ENCODE measurements at regions of chr3 and their contacts with region 1.

Region 1: DNA sequence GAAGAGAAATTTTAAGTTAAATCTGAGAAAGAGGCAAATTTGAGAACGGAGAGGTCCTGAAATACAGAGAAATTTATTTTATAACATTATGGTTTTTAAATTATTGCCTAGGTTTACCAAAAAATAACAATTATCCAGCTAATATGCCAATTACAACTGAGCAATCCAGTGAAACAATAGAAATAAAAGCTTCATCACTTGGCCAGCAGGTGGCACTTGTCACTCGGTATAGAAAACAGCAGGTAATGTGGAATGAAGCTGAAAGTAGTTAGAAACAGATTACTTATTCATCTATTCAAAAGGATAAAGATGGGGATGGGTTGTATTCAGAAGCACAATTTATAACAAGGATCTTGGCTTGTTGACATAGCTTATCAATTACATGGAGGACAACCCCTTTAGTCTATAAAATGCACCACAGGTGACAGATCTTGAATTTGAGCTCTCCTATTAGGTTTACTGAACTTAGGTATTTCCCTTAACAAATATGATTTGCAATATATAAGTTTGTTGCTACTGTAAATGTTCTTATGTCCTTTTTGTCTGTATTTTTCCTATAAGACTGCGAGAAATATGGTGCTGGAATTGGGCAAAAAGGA is 70.1 kb upstream of the GUCA1C start:
- DNase-seq: peak in 6 of 9 donors; percentile 2 to 42 (median 32)
- ATAC-seq: peak; percentile 60
- H3K4me3 ChIP-seq: no peak overlapping the region
- H3K4me3 Mint-ChIP-seq: no peak overlapping the region
- H3K27ac ChIP-seq: no peak overlapping the region
- H3K27ac Mint-ChIP-seq: no peak overlapping the region
- H3K4me1 ChIP-seq: no peaks in the 10 kb centered on the region
- H3K4me1 Mint-ChIP-seq: no peaks in the 10 kb centered on the region
- H3K27me3 ChIP-seq: no peaks in the 10 kb centered on the region
- H3K27me3 Mint-ChIP-seq: peaks cover 0 to 18% (median 0%) of the 10 kb centered on the region in 5 donors

Region 2: GRCh38 chr3:108489771-108490170 is 534.0 kb before region 1 on chr3:
- CTCF ChIA-PET with region 1: interaction called, 4 read pairs
- POLR2A ChIA-PET with region 1: no interaction called
- intact Hi-C with region 1: loop called in 1 of 2 experiments (anchors 5 kb)
- DNase-seq: peak in 7 of 9 donors; percentile 43 to 64 (median 54)
- ATAC-seq: peak; percentile 86
- H3K4me3 ChIP-seq: no peak overlapping the region
- H3K4me3 Mint-ChIP-seq: no peak overlapping the region
- H3K27ac ChIP-seq: no peak overlapping the region
- H3K27ac Mint-ChIP-seq: no peak overlapping the region
- H3K4me1 ChIP-seq: no peaks in the 10 kb centered on the region
- H3K4me1 Mint-ChIP-seq: peaks cover 0 to 3% (median 0%) of the 10 kb centered on the region in 7 donors
- H3K27me3 ChIP-seq: no peaks in the 10 kb centered on the region
- H3K27me3 Mint-ChIP-seq: peaks cover 0 to 13% (median 0%) of the 10 kb centered on the region in 5 donors

Region 3: GRCh38 chr3:109563149-109563548 is 539.4 kb after region 1 on chr3:
- CTCF ChIA-PET with region 1: no interaction called
- POLR2A ChIA-PET with region 1: no interaction called
- intact Hi-C with region 1: no loop called
- DNase-seq: peak in 5 of 9 donors; percentile 10 to 55 (median 22)
- ATAC-seq: peak; percentile 68
- H3K4me3 ChIP-seq: no peak overlapping the region
- H3K4me3 Mint-ChIP-seq: peak overlapping the region in 2 of 10 donors; percentile 7 to 62
- H3K27ac ChIP-seq: no peak overlapping the region
- H3K27ac Mint-ChIP-seq: peak overlapping the region in 2 of 9 donors; percentile 37 to 46
- H3K4me1 ChIP-seq: no peaks in the 10 kb centered on the region
- H3K4me1 Mint-ChIP-seq: peaks cover 0 to 9% (median 4%) of the 10 kb centered on the region in 7 donors
- H3K27me3 ChIP-seq: no peaks in the 10 kb centered on the region
- H3K27me3 Mint-ChIP-seq: peaks cover 0 to 5% (median 0%) of the 10 kb centered on the region in 5 donors

Measured in naive thymus-derived CD4-positive, alpha-beta T cell (primary cell).